ENCODE measurements at regions of chr12 and their contacts with region 1.

Region 1: DNA sequence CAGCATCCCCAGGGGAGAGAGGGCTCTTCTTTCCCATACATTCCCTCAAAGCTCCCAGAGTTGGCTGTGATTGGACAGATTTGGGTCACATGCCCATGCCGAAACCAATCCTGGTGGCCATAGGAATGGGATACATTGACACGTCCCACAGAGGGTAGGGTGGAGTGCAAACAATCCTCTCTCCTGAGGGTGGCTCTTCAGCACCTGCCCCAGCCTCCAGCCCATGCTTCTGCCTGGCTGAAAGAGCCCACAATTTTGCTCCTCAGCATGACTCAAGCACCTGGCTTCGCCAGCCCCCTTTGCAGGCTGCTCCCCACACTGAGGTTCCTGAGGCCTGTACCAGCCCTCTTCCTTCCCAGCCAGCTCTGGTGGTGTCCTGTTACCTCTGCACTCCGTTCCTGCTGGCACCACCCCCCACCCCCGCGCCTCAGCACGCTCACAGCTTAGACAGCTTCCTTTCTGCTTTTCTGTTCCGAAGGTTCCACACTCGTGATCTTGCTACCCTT is 71.7 kb downstream of the CCDC92 start:
- DNase-seq: no peak
- H3K4me3 ChIP-seq: no peak overlapping the region
- H3K27ac ChIP-seq: no peak overlapping the region
- H3K4me1 ChIP-seq: no peaks in the 10 kb centered on the region
- H3K27me3 ChIP-seq: peaks cover 0 to 57% of the 10 kb centered on the region in 2 donors
- CTCF ChIP-seq: no peak

Region 2: GRCh38 chr12:123948796-123949769 is 48.2 kb after region 1 on chr12:
- intact Hi-C with region 1: no loop called
- DNase-seq: no peak
- H3K4me3 ChIP-seq: no peak overlapping the region
- H3K27ac ChIP-seq: no peak overlapping the region
- H3K4me1 ChIP-seq: peaks cover 0 to 31% (median 18%) of the 10 kb centered on the region in 4 donors
- H3K27me3 ChIP-seq: no peaks in the 10 kb centered on the region
- CTCF ChIP-seq: no peak

Region 3: GRCh38 chr12:123986374-123986965 is 85.5 kb after region 1 on chr12:
- intact Hi-C with region 1: loop called (anchors 5 kb)
- DNase-seq: no peak
- H3K4me3 ChIP-seq: no peak overlapping the region
- H3K27ac ChIP-seq: peak overlapping the region in 1 of 2 donors; percentile 23
- H3K4me1 ChIP-seq: peaks cover 0 to 17% (median 9%) of the 10 kb centered on the region in 4 donors
- H3K27me3 ChIP-seq: no peaks in the 10 kb centered on the region
- CTCF ChIP-seq: no peak